Left ventricle myocardium inferior (tissue), 1 donor: ENCODE measurements at regions of chr17 and their contacts with region 1.

Region 1: GRCh38 chr17:56592487-56593085 is 913 bp upstream of the NOG start:
- DNase-seq: peak; percentile 58
- H3K4me3 ChIP-seq: peak overlapping the region; percentile 71
- H3K27ac ChIP-seq: no peak overlapping the region
- H3K4me1 ChIP-seq: peaks cover 52% of the 10 kb centered on the region
- H3K27me3 ChIP-seq: peaks cover 88% of the 10 kb centered on the region
- CTCF ChIP-seq: peak; percentile 98

Region 2: DNA sequence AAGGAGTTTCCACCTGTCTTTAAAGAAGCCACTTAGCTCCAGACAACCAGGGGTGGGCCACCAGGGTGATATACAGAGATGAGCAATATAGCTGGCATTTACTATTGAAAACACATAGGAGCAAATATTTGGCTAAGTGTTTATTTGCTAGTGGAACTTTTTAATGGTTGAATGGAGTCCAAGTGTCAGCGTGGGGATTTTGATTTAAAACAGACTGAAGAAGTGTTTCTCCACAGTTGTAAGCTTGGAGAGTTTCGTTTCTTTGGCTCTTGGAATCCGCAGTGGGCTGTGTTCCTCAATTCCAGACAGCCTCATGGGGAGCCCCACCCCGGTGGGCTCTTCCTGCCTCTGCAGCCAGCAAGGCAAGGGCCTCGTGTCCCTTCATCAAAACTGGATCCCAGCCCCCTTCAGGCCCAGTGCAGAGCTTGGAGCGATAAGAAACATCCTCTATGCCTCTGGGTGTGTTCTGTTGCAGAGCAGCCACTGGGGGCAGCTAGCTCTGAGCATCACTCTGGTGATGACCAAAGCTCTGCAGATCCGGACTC is 37.0 kb after region 1 on chr17:
- intact Hi-C with region 1: no loop called
- DNase-seq: no peak
- H3K4me3 ChIP-seq: no peak overlapping the region
- H3K27ac ChIP-seq: no peak overlapping the region
- H3K4me1 ChIP-seq: no peaks in the 10 kb centered on the region
- H3K27me3 ChIP-seq: peaks cover 65% of the 10 kb centered on the region
- CTCF ChIP-seq: peak; percentile 16

Region 3: GRCh38 chr17:56715613-56716357 is 123.2 kb after region 1 on chr17:
- intact Hi-C with region 1: loop called (anchors 5 kb)
- DNase-seq: peak; percentile 66
- H3K4me3 ChIP-seq: no peak overlapping the region
- H3K27ac ChIP-seq: no peak overlapping the region
- H3K4me1 ChIP-seq: no peaks in the 10 kb centered on the region
- H3K27me3 ChIP-seq: peaks cover 34% of the 10 kb centered on the region
- CTCF ChIP-seq: peak; percentile 87

Region 4: GRCh38 chr17:56762988-56763387 is 170.4 kb after region 1 on chr17:
- intact Hi-C with region 1: no loop called
- DNase-seq: no peak
- H3K4me3 ChIP-seq: no peak overlapping the region
- H3K27ac ChIP-seq: no peak overlapping the region
- H3K4me1 ChIP-seq: no peaks in the 10 kb centered on the region
- H3K27me3 ChIP-seq: peaks cover 12% of the 10 kb centered on the region
- CTCF ChIP-seq: no peak

Region 5: GRCh38 chr17:56779898-56780733 is 187.5 kb after region 1 on chr17:
- intact Hi-C with region 1: loop called (anchors 10 kb)
- DNase-seq: peak; percentile 78
- H3K4me3 ChIP-seq: peak overlapping the region; percentile 57
- H3K27ac ChIP-seq: no peak overlapping the region
- H3K4me1 ChIP-seq: peaks cover 11% of the 10 kb centered on the region
- H3K27me3 ChIP-seq: peaks cover 50% of the 10 kb centered on the region
- CTCF ChIP-seq: peak; percentile 100